WTC11 (cell line): ENCODE measurements at regions of chr19 and their contacts with region 1.

Region 1: DNA sequence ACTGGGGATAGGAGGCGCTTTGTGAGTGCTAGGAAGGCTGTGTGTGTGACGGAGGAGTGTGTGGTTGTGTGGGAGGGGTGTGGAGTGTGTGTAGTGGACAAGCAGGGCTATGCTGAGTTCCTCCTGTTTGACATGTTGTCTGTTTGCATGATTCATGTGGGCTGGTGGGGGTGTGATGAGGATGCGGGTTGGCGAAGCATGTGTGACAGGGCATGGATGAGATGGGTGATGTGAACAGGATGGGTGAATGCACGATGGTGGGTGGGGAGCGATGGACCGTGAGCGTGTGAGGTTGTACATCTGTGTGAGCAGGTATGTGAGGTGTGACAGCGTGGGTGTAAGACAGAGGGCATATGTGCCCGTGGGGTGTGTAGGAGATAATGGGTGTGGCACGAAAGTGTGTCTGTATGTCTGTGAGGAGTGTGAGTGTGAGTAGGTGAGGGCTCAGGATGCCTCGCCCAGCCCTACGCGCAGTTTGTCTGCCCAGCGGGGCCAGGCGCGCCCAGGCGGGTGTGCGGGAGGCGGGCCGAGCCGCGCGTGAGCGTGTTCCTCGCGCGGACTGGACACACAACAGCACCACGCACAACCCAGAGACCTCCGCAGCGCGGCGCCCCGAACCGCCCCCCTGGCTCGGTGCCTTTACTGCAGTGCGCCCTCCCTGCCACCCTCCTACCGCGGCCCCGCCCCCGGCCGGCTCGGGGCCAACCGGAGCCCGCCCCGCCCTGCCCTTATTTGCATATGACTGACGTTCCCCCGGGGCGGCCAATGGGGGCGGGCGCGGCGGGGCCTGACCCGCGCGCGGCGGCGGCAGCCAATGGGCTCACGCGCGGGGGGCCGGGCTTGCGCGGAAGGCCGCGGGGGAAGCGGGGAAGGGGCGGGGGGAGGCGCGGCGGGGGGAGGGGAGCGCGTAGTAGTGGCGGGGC is 14.4 kb downstream of the CIC start:
- DNase-seq: peak; percentile 95
- ATAC-seq: peak; percentile 73
- H3K4me3 Mint-ChIP-seq: no peak overlapping the region
- H3K27ac Mint-ChIP-seq: no peak overlapping the region
- H3K4me1 Mint-ChIP-seq: peaks cover 34% of the 10 kb centered on the region
- H3K27me3 Mint-ChIP-seq: no peaks in the 10 kb centered on the region
- CTCF ChIP-seq: no peak

Region 2: GRCh38 chr19:42132851-42133528 is 150.4 kb before region 1 on chr19:
- CTCF ChIA-PET with region 1: interaction called, 17 read pairs
- POLR2A ChIA-PET with region 1: interaction called, 3 read pairs
- DNase-seq: peak; percentile 91
- ATAC-seq: peak; percentile 86
- H3K4me3 Mint-ChIP-seq: peak overlapping the region; percentile 76
- H3K27ac Mint-ChIP-seq: no peak overlapping the region
- H3K4me1 Mint-ChIP-seq: peaks cover 20% of the 10 kb centered on the region
- H3K27me3 Mint-ChIP-seq: peaks cover 30% of the 10 kb centered on the region
- CTCF ChIP-seq: peak; percentile 91

Region 3: GRCh38 chr19:42166316-42166715 is 117.1 kb before region 1 on chr19:
- CTCF ChIA-PET with region 1: no interaction called
- POLR2A ChIA-PET with region 1: no interaction called
- DNase-seq: no peak
- ATAC-seq: no peak
- H3K4me3 Mint-ChIP-seq: no peak overlapping the region
- H3K27ac Mint-ChIP-seq: no peak overlapping the region
- H3K4me1 Mint-ChIP-seq: no peaks in the 10 kb centered on the region
- H3K27me3 Mint-ChIP-seq: peaks cover 9% of the 10 kb centered on the region; the same call in 1 of the 2 replicates
- CTCF ChIP-seq: no peak

Region 4: GRCh38 chr19:42233106-42233505 is 50.3 kb before region 1 on chr19:
- CTCF ChIA-PET with region 1: interaction called, 16 read pairs
- POLR2A ChIA-PET with region 1: no interaction called
- DNase-seq: no peak
- ATAC-seq: 0 out of 2 replicates have a peak, but pooled peaks have one; percentile 26
- H3K4me3 Mint-ChIP-seq: no peak overlapping the region
- H3K27ac Mint-ChIP-seq: no peak overlapping the region; the same call in 1 of the 2 replicates
- H3K4me1 Mint-ChIP-seq: 0 out of 2 replicates have a peak, but pooled peaks cover 4% of the 10 kb centered on the region
- H3K27me3 Mint-ChIP-seq: no peaks in the 10 kb centered on the region
- CTCF ChIP-seq: no peak

Region 5: DNA sequence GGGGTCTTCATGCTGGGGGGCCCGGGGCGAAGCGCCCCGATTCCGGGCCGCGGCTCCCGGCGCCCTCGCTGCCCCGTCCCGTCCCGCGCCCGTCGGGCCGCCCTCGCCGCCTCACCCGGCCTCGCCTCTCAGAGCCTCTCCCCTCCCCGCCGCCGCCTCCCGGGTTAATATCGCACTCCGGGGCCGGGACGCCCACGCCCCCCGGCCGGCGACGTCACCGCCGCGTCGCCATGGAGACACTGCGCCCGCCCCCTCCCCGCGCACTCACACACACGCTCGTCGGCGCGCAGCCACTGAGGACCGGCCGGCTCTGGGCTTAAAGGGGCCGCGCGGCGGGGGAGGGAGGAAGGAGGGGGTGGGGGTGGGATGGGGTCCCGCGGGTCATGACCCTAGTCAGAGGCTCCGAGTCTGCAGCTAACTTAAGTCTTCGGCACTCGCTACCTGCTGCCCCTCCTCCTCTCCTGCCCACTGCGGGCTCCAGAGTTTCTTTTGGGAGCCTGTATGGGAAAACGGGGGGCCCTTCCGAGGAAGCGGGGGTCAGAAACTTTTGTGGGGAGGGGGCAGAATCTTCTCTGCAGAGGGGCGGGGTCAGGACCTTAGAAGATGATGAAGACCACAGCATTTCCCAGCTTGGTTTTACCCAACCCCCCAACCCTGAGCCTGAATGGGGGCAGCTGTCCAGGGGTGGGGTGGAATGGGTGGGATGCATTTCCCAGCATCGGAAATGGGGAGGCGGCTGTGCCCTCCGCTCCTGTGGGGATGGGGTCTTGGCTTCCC is 28.2 kb before region 1 on chr19 and contains the start of gene ERF:
- CTCF ChIA-PET with region 1: interaction called, 32 read pairs
- POLR2A ChIA-PET with region 1: interaction called, 6 read pairs
- DNase-seq: peak; percentile 88
- ATAC-seq: peak; percentile 58
- H3K4me3 Mint-ChIP-seq: peak within 1 kb of the TSS; percentile 82
- H3K27ac Mint-ChIP-seq: peak within 1 kb of the TSS; percentile 69; the same call in 1 of the 2 replicates
- H3K4me1 Mint-ChIP-seq: peaks cover 29% of the 10 kb centered on the region
- H3K27me3 Mint-ChIP-seq: peaks cover 20% of the 10 kb centered on the region
- CTCF ChIP-seq: no peak
- total RNA-seq, gene ERF: 65.4 to 67.6 TPM (median 65.9 TPM) in 3 replicates

Region 6: GRCh38 chr19:42295831-42296525 is 12.6 kb after region 1 on chr19:
- CTCF ChIA-PET with region 1: interaction called, 30 read pairs
- POLR2A ChIA-PET with region 1: interaction called, 3 read pairs
- DNase-seq: peak; percentile 97
- ATAC-seq: peak; percentile 86
- H3K4me3 Mint-ChIP-seq: no peak overlapping the region
- H3K27ac Mint-ChIP-seq: peak overlapping the region; percentile 85
- H3K4me1 Mint-ChIP-seq: peaks cover 16% of the 10 kb centered on the region
- H3K27me3 Mint-ChIP-seq: no peaks in the 10 kb centered on the region
- CTCF ChIP-seq: peak; percentile 96

Region 7: GRCh38 chr19:42363614-42364346 is 80.4 kb after region 1 on chr19:
- CTCF ChIA-PET with region 1: no interaction called
- POLR2A ChIA-PET with region 1: no interaction called
- DNase-seq: no peak
- ATAC-seq: no peak
- H3K4me3 Mint-ChIP-seq: no peak overlapping the region
- H3K27ac Mint-ChIP-seq: no peak overlapping the region
- H3K4me1 Mint-ChIP-seq: peaks cover 41% of the 10 kb centered on the region
- H3K27me3 Mint-ChIP-seq: no peaks in the 10 kb centered on the region
- CTCF ChIP-seq: no peak